ENCODE measurements at regions of chr16 and their contacts with region 1.

Region 1: GRCh38 chr16:81403616-81404373 is 40.8 kb upstream of the CMIP start:
- DNase-seq: peak; percentile 93 to 94
- H3K4me3 ChIP-seq: peak overlapping the region; percentile 23 to 33 (median 25)
- H3K27ac ChIP-seq: no peak overlapping the region
- H3K4me1 ChIP-seq: peaks cover 8 to 19% (median 12%) of the 10 kb centered on the region in 4 donors
- H3K27me3 ChIP-seq: no peaks in the 10 kb centered on the region
- CTCF ChIP-seq: peak in 6 of 7 experiments; percentile 36 to 97 (median 94)
- EP300 ChIP-seq: no peak
- POLR2A ChIP-seq: no peak

Region 2: DNA sequence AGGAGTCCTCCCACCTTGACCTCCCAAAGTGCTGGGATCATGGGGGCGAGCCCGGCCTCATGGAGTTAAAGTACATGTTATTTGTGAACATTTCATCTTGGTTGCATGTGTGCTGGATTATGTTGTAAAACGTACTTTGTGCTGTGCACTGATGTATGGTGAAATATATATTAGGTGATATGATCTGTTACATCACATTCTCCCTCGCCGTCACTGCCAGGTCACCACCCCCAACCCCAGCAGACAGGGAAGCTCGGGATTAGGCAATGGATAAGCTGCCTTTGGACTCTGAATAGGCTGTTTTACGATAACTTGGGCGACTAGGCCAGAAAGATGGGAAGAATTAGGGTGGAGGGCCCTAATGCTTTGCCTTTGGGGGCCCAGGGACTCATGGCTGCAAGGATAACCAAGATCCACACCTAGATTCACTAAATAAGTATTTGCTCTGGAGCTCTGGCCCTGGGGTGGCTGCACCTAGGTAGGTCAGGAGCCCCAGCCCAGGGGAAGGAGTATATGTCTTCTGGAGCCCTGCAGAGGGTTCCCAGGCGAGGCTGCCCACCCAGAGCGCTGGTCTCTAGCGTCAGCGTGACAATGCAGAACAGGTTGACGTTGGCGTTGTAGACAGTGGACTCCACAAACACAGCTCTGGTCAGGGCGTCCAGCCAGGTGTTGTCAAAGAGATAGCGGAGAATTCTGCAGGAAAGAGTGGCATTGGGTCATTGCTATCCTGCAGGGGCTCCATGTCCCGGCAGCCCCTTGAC is 280.5 kb before region 1 on chr16:
- intact Hi-C with region 1: no loop called
- DNase-seq: no peak
- H3K4me3 ChIP-seq: no peak overlapping the region
- H3K27ac ChIP-seq: no peak overlapping the region
- H3K4me1 ChIP-seq: no peaks in the 10 kb centered on the region
- H3K27me3 ChIP-seq: no peaks in the 10 kb centered on the region
- CTCF ChIP-seq: no peak
- EP300 ChIP-seq: no peak
- POLR2A ChIP-seq: no peak

Region 3: DNA sequence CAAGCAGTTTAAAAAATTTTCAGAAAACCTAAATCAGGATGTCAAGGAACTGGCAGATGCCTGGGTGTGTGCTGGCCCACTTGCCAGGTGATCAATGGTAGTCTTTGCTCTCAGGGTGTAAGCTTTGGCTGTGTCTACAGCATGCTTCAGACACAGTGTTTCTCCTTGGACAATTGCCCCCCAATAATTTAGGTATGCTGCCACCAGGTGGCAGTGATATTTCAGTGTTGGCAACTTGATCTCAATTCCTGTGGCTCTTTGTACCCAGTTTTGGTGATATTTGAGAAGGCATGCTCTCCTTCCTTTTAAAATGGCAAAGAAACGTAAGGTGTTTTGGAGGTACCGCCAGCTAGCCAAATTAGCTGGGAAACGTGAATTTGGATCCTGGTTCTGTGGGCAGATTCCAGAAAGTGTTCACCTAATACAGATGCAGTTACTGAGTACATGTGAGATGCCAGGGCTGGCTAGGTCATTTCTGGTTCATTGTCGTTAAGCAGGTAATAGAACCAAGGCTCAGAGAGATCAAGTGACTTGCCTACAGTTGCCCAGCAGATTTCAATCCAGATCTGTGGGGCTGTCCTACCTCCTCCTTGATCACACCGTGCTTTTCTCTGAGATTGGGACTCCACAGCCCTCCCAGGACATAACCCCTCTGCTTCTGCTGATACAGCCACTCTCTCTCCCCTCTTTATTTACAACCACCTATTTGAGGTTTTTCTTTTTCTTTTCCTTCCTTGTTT is 219.7 kb after region 1 on chr16:
- intact Hi-C with region 1: loop called (anchors 10 kb)
- DNase-seq: peak; percentile 57 to 75
- H3K4me3 ChIP-seq: no peak overlapping the region
- H3K27ac ChIP-seq: no peak overlapping the region
- H3K4me1 ChIP-seq: peaks cover 15 to 49% (median 31%) of the 10 kb centered on the region in 4 donors
- H3K27me3 ChIP-seq: no peaks in the 10 kb centered on the region
- CTCF ChIP-seq: peak in 5 of 7 experiments; percentile 43 to 72 (median 57)
- EP300 ChIP-seq: no peak
- POLR2A ChIP-seq: no peak

Region 4: DNA sequence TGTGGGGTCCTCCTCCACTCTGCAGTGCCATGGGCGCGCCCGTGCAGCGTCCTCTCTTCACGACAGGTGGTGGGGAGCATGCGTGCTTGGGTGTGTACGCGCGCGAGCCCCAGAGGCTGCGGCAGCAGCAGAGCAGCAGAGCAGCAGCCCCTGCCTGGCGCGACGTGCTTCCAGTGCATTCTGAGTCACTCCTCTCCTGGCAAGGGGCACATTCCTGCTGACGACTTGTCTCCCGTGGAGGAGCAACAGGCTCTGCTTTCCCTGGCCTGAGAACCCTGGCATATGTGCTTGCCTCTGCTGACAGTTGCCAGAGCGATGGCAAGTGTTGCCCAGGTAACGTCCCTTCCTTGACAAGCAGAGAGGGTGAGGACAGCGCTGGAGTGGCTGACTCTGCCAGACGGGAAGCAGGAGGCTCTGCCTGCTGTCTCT is 241.5 kb after region 1 on chr16:
- intact Hi-C with region 1: no loop called
- DNase-seq: peak in 1 of 2 donors; percentile 89
- H3K4me3 ChIP-seq: no peak overlapping the region
- H3K27ac ChIP-seq: peak overlapping the region; percentile 35 to 84 (median 53)
- H3K4me1 ChIP-seq: peaks cover 0 to 38% (median 24%) of the 10 kb centered on the region in 4 donors
- H3K27me3 ChIP-seq: no peaks in the 10 kb centered on the region
- CTCF ChIP-seq: no peak
- EP300 ChIP-seq: no peak
- POLR2A ChIP-seq: no peak

Region 5: GRCh38 chr16:81723098-81723723 is 319.4 kb after region 1 on chr16:
- intact Hi-C with region 1: loop called (anchors 10 kb)
- DNase-seq: peak in 1 of 2 donors; percentile 92
- H3K4me3 ChIP-seq: no peak overlapping the region
- H3K27ac ChIP-seq: no peak overlapping the region
- H3K4me1 ChIP-seq: peaks cover 0 to 21% (median 12%) of the 10 kb centered on the region in 4 donors
- H3K27me3 ChIP-seq: no peaks in the 10 kb centered on the region
- CTCF ChIP-seq: peak in 5 of 7 experiments; percentile 53 to 79 (median 69)
- EP300 ChIP-seq: no peak
- POLR2A ChIP-seq: no peak

Measured in stomach (tissue), 19 donors.